AG04449 (cell line): ENCODE measurements at regions of chr19 and their contacts with region 1.

Region 1: GRCh38 chr19:10946964-10947657 is 13.7 kb upstream of the SMARCA4 start:
- DNase-seq: peak; percentile 78
- H3K4me3 ChIP-seq: no peak overlapping the region
- CTCF ChIP-seq: no peak

Region 2: DNA sequence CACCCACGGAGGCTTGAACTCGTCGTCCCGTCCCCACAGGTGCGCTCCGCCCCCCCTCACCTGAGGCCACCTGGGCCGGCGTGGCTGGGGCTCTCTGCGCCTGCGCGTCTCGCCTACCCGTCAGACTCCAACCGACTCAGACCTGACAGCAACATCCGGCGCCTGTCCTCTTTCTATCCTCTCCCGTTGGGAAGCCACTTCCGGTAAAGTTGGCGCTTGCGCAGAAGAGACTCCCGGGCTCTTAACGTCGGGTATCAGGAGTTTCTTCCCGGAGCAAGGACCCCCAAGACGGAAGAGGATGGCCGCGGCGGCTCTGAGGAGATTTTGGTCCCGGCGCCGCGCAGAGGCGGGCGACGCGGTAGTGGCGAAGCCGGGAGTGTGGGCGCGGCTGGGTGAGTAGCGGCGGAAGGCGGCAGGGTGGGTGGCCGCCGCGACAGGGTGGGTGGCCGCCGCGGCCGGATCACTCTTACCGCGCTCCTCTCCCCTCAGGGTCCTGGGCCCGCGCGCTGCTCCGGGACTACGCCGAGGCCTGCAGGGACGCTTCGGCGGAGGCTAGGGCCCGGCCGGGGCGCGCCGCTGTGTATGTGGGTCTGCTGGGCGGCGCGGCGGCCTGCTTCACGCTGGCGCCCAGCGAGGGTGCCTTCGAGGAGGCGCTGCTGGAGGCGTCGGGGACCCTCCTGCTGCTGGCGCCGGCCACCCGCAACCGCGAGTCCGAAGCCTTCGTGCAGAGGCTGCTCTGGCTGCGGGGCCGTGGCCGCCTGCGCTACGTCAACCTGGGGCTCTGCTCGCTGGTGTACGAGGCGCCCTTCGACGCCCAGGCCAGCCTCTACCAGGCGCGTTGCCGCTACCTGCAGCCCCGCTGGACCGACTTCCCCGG is 18.3 kb before region 1 on chr19 and contains the starts of genes TIMM29 and YIPF2:
- CTCF ChIA-PET with region 1: interaction called, 73 read pairs
- POLR2A ChIA-PET with region 1: no interaction called
- DNase-seq: peak; percentile 88
- H3K4me3 ChIP-seq: peak within 1 kb of the TSS; percentile 90
- CTCF ChIP-seq: no peak